Lower leg skin (tissue), 4 donors: ENCODE measurements at regions of chr2 and their contacts with region 1.

Region 1: DNA sequence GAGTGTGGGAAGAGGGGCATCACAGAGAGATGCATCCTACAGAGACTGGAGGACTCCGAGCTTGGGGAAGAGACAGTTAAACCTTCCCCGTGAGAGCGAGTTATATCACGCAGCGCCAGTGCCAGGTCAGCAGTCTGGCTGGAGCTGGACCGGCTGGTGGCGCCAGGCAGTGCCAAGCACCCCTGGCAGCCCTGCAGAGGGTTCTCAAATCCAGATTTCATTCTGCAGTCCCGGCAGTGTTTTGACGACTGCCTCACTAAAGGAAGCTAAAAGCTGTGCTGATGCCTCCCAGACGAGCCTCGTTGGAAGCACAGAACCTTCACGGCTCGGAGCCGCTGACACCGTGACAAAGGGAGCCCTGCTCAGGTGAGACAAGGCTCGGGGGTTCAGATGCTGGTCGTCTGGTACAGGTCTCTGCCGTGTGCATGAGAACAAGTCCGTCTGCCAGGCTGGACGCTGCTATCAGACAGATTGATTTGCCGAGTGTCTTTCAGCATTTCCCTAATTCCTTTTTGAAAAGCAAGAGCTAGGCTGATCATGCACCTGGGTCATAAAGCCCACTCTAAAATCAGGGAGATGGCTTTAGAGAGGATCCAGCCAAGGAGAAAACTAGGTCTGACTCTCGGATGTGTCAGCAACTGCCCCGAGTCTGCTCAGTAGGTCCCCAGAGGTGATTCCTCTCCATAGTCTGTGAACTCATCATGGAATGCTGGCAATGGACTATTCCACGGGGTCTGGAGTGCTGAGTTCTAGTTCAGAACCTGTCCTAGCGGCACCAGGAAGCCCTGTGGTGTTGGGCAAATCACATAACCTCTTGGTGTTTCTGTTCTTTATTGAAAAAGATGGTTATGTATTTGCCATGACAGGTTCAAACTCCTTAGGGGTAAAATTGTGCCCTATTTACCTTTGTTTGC is 240.6 kb downstream of the SOX11 start:
- DNase-seq: no peak
- H3K4me3 ChIP-seq: no peak overlapping the region
- CTCF ChIP-seq: no peak
- POLR2A ChIP-seq: no peak

Region 2: GRCh38 chr2:5894355-5894754 is 38.5 kb before region 1 on chr2:
- intact Hi-C with region 1: loop called (anchors 2 kb)
- DNase-seq: no peak
- H3K4me3 ChIP-seq: no peak overlapping the region
- CTCF ChIP-seq: no peak
- POLR2A ChIP-seq: no peak

Region 3: DNA sequence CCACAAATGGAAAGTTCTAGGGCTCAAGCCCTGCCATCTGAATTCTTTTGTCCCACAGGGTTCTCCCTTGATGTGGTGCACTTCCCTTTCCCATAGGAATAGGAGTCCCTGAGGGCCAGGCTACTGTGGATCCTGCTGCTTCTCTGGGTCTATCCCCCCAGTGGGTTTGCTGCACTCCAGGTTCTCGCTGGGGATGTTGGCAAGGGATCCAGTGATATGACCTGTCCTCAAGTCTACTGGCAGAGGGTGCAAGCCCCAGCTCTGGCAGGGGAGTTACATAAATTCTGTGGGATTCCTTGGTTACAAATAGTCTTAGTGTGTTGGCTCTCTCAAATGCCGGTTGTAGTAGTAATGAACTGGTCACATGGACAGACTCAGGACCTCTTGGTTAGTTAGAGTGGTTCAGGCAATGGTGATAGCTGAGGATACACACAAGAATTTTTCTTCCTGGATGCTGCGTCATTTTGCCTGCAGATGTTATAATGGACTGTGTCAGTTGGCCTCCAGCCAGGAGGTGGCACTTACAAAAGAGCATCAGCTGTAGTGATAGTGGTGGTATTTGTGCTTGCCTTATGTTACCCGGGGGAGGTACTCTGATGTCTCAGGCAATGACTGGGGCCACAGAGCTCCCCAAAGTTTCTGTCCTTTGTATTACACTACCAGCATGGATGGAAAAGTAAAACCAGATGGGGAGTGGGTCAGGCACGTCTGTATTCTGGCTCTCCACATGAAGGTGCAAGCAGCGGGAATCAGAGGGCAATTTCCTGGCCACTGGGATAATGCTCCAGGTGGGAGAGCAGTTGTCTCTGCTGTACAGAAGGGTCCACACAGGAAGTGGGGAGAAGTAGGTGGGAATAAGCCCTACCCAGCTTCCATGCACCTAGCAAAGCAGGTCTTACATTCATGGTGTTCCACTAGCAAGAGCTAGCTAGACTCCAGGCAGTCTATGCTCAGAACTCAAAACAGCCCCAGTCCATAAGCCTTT is 27.3 kb after region 1 on chr2:
- intact Hi-C with region 1: no loop called
- DNase-seq: peak; percentile 6 to 53
- H3K4me3 ChIP-seq: no peak overlapping the region
- CTCF ChIP-seq: no peak
- POLR2A ChIP-seq: no peak